CD8-positive, alpha-beta T cell (primary cell): ENCODE measurements at regions of chr6 and their contacts with region 1.

Region 1: GRCh38 chr6:710601-711571 is 17.9 kb upstream of the EXOC2 start:
- DNase-seq: peak; percentile 5 to 81 (median 41)
- ATAC-seq: peak; percentile 86
- H3K4me3 ChIP-seq: peak overlapping the region; percentile 81 to 84
- H3K4me3 Mint-ChIP-seq: peak overlapping the region; percentile 96
- H3K27ac ChIP-seq: peak overlapping the region; percentile 80 to 94
- H3K27ac Mint-ChIP-seq: peak overlapping the region; percentile 97
- H3K4me1 ChIP-seq: peaks cover 9% of the 10 kb centered on the region
- H3K4me1 Mint-ChIP-seq: peaks cover 19% of the 10 kb centered on the region
- H3K27me3 ChIP-seq: peaks cover 0 to 3% of the 10 kb centered on the region in 2 experiments
- H3K27me3 Mint-ChIP-seq: peaks cover 6% of the 10 kb centered on the region
- CTCF ChIP-seq: no peak

Region 2: DNA sequence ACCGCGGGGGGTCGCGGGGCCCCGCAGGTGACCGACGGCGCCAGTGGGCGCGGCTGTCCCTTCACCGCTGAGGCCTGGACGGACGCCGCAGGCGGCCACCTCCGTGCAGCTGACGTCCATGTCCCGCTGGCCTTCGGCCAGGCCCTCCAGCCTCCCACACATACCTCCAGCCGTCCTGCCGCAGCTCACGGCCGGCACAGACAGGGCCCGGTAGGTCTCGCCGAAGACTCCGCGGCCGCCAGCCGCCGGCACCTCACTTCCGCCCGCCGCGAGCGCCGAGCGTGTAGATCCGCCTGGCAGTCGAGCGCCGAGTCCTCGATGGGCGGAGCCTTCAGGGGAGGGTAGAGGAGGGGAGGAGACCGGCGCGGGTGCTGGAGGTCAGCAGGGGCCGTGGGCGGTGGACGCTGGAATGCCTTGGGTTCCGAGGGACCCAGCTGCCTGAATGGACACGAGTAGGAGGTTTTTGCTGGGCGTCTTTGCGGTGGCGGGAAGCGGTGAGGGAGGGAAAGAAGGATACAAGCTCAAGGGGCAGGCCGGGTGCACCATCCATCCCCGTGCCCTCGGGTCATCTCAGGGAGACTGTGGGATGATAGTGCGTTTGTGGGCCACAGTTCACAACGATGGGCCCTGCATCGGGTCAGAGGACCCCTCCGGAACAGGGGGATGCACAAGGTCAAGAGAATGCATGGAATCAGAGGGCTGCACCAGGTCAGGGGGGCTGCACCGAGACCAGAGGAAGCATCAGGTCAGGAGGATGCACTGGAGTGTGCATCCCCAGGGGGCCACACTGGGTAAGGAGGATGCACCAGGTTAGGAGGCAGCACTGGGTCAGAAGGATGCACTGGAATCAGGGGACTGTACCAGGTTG is 17.8 kb before region 1 on chr6 and contains the start of gene EXOC2:
- CTCF ChIA-PET with region 1: no interaction called
- POLR2A ChIA-PET with region 1: interaction called, 8 read pairs
- intact Hi-C with region 1: loop called (anchors 1 kb)
- DNase-seq: peak; percentile 67 to 89 (median 83)
- ATAC-seq: peak; percentile 77
- H3K4me3 ChIP-seq: peak within 1 kb of the TSS; percentile 72 to 89
- H3K4me3 Mint-ChIP-seq: peak within 1 kb of the TSS; percentile 95
- H3K27ac ChIP-seq: peak within 1 kb of the TSS; percentile 79 to 88
- H3K27ac Mint-ChIP-seq: peak within 1 kb of the TSS; percentile 95
- H3K4me1 ChIP-seq: peaks cover 19% of the 10 kb centered on the region
- H3K4me1 Mint-ChIP-seq: peaks cover 26% of the 10 kb centered on the region
- H3K27me3 ChIP-seq: no peaks in the 10 kb centered on the region
- H3K27me3 Mint-ChIP-seq: no peaks in the 10 kb centered on the region
- CTCF ChIP-seq: no peak
- total RNA-seq, gene EXOC2: 19.3 to 21.2 TPM

Region 3: DNA sequence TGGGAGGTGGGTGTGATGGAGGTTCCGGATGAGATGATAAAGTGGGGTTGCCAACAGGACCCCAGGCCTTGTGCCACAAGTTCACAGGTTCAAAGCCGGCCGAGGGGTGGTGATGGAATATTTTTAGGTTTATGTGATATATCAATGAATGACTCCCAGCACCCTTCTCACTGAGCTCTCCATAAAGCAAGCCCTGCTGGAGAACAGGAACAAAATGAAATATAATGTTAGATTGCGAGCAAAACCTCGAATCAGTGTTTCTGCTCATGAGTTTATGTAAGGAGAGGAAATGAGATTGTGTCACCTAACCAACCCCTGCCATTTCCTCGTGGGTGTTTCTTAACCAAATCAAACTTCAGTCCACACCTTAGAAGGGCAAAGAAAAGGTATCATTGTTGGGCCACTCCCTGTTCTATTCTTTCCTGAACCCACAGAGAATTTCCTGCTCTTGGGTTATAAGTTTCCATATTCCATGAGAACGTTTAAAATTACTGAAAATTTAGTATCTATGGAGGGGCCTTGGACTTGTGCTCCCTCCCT is 174.2 kb after region 1 on chr6:
- CTCF ChIA-PET with region 1: no interaction called
- POLR2A ChIA-PET with region 1: no interaction called
- intact Hi-C with region 1: no loop called
- DNase-seq: no peak
- ATAC-seq: no peak
- H3K4me3 ChIP-seq: no peak overlapping the region
- H3K4me3 Mint-ChIP-seq: no peak overlapping the region
- H3K27ac ChIP-seq: no peak overlapping the region
- H3K27ac Mint-ChIP-seq: no peak overlapping the region
- H3K4me1 ChIP-seq: no peaks in the 10 kb centered on the region
- H3K4me1 Mint-ChIP-seq: peaks cover 12% of the 10 kb centered on the region
- H3K27me3 ChIP-seq: no peaks in the 10 kb centered on the region
- H3K27me3 Mint-ChIP-seq: peaks cover 7% of the 10 kb centered on the region
- CTCF ChIP-seq: no peak